ENCODE measurements at regions of chr22 and their contacts with region 1.

Region 1: DNA sequence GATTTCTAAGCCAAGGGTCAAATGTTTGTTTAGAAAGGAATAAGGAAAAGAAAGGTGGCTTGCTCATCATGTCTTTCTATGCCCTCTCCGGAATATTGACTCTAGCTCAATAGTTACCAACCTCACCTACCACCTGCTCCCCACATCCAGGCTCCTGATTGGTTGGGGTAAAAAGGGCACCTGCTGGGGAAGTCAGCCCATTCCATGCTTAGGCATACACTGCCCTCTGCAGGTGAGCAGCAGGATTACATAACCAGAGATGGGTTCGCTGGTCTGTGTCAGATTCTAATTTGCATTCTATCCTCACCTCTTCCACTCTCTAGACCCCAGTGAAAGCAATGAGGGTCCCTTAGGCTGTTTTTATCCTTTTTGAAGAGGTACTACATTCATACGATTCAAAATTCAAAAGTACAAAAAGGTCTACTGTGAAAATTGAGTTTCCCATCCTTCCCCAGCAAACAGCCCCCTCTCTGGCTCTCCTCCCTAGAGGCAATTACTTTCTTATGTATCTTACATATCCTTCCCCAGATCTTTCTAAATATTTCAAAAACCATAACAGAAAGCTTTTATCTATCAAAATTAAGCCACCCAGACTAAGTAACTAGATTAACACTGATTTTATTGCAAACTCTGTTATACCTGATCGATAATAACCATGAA is 98.0 kb upstream of the ASPHD2 start:
- DNase-seq: peak; percentile 62 to 68
- ATAC-seq: peak; percentile 99

Region 2: GRCh38 chr22:25777870-25778269 is 553.2 kb before region 1 on chr22:
- intact Hi-C with region 1: loop called in 1 of 2 experiments (anchors 10 kb)
- DNase-seq: no peak
- ATAC-seq: peak; percentile 67

Region 3: GRCh38 chr22:25829808-25830777 is 501.0 kb before region 1 on chr22:
- intact Hi-C with region 1: no loop called
- DNase-seq: no peak
- ATAC-seq: no peak

Region 4: DNA sequence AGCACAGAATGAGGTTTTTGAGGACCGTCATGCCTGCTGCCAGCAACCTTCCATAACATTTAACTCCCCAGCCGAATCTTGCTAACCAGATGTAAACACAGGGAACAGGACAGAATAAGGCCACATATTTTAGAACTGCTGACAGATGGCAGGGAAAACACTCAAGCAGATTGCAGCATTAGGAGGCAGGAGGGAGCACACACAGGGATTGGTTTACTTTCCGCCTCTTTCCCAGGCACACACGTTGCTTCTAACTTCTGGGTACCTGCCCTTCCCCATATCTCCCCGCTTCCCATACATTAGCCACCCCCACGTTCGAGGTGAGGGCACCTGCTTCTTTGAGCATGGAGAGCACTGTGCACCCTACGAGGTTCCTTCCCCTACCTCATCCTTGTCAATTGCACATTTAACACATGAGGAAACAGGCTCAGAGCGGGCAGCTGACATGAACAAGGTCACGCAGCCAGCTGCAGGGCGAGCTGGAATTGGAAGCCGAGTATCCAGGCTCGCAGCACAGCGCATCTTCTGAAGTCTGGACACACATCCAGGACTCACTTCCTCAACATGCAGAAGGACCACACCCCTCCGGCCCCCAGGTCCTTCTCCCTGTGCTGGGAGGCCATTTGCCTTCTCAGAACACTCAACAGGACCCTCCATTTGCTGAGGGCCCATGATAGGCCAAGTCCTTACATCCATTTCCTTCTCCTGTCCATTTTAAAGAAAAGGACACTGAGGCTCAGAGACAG is 116.7 kb after region 1 on chr22:
- intact Hi-C with region 1: no loop called
- DNase-seq: no peak
- ATAC-seq: no peak